WTC11 (cell line): ENCODE measurements at regions of chr7 and their contacts with region 1.

Region 1: DNA sequence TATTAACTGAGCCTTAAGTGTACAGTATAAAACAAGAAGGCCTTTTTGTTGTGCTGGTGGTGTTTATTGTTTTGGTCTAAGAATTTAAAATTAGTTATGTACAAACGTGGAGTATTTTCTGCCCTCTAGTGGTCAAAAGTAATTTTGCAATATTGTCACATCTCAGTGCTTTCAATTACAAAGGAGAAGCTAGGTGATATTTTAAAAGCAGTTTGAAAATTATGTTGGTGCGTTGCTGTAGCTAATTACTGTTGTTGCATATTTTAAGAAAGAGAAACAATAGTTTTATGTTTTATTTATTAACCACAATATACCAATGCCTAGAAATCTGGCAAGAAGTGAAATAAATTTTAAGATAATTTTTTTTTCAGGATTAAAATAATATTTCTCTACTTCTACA is 11.4 kb downstream of the NPVF start:
- DNase-seq: no peak
- ATAC-seq: no peak
- H3K4me3 Mint-ChIP-seq: no peak overlapping the region
- H3K27ac Mint-ChIP-seq: no peak overlapping the region
- H3K4me1 Mint-ChIP-seq: peaks cover 4% of the 10 kb centered on the region
- H3K27me3 Mint-ChIP-seq: no peaks in the 10 kb centered on the region
- CTCF ChIP-seq: peak; percentile 71

Region 2: DNA sequence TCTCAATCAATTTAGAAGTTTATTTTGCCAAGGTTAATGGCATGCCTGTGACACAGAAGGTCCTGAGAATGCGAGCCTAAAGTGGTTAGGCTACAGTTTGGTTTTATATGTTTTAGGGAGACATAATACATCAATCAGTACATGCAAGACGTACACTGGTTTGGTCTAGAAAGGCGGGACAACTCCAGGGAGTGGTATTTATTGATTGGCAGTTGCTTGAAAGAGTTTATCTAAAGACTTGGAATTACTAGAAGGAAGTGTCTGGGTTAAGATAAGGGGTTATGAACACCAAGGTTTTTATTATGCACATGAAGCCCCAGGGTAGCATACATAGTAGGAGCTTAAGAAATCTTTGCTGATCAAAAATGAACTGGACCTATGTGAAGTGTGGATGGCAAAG is 10.1 kb before region 1 on chr7:
- CTCF ChIA-PET with region 1: interaction called, 14 read pairs
- POLR2A ChIA-PET with region 1: no interaction called
- DNase-seq: no peak
- ATAC-seq: no peak
- H3K4me3 Mint-ChIP-seq: no peak overlapping the region
- H3K27ac Mint-ChIP-seq: no peak overlapping the region
- H3K4me1 Mint-ChIP-seq: no peaks in the 10 kb centered on the region
- H3K27me3 Mint-ChIP-seq: no peaks in the 10 kb centered on the region; the same call in 1 of the 2 replicates
- CTCF ChIP-seq: no peak

Region 3: DNA sequence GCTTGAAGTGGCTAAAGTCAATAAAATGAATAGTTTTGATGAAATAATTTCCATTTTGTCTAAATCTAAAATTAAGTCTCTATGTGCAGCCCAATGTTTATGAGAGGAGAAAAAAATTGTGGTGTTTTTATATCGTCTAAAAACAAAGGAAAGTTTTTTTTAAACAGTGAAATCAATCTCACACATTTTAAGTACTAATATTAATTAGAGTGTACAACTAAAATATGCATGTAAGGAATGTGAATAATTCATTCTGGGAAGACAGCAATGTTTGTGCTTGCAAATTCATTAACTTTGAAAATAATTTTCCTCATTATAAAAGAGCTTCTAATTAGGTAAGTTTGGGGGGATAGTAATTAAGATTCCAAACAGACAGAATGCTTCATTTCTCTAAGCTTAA is 11.5 kb after region 1 on chr7 and contains the start of gene NPVF:
- CTCF ChIA-PET with region 1: interaction called, 19 read pairs
- POLR2A ChIA-PET with region 1: no interaction called
- DNase-seq: no peak
- ATAC-seq: no peak
- H3K4me3 Mint-ChIP-seq: no peak within 1 kb of the TSS
- H3K27ac Mint-ChIP-seq: no peak within 1 kb of the TSS
- H3K4me1 Mint-ChIP-seq: no peaks in the 10 kb centered on the region
- H3K27me3 Mint-ChIP-seq: peaks cover 3% of the 10 kb centered on the region; the same call in 1 of the 2 replicates
- CTCF ChIP-seq: no peak
- total RNA-seq, gene NPVF: not detected in 3 replicates

Region 4: GRCh38 chr7:25234336-25234735 is 17.5 kb after region 1 on chr7:
- CTCF ChIA-PET with region 1: interaction called, 19 read pairs
- POLR2A ChIA-PET with region 1: no interaction called
- DNase-seq: no peak
- ATAC-seq: no peak
- H3K4me3 Mint-ChIP-seq: no peak overlapping the region
- H3K27ac Mint-ChIP-seq: no peak overlapping the region
- H3K4me1 Mint-ChIP-seq: no peaks in the 10 kb centered on the region
- H3K27me3 Mint-ChIP-seq: peaks cover 19% of the 10 kb centered on the region
- CTCF ChIP-seq: no peak

Region 5: GRCh38 chr7:25244254-25245033 is 27.6 kb after region 1 on chr7:
- CTCF ChIA-PET with region 1: interaction called, 13 read pairs
- POLR2A ChIA-PET with region 1: no interaction called
- DNase-seq: no peak
- ATAC-seq: peak; percentile 78
- H3K4me3 Mint-ChIP-seq: no peak overlapping the region
- H3K27ac Mint-ChIP-seq: no peak overlapping the region
- H3K4me1 Mint-ChIP-seq: peaks cover 11% of the 10 kb centered on the region
- H3K27me3 Mint-ChIP-seq: peaks cover 95% of the 10 kb centered on the region
- CTCF ChIP-seq: no peak

Region 6: DNA sequence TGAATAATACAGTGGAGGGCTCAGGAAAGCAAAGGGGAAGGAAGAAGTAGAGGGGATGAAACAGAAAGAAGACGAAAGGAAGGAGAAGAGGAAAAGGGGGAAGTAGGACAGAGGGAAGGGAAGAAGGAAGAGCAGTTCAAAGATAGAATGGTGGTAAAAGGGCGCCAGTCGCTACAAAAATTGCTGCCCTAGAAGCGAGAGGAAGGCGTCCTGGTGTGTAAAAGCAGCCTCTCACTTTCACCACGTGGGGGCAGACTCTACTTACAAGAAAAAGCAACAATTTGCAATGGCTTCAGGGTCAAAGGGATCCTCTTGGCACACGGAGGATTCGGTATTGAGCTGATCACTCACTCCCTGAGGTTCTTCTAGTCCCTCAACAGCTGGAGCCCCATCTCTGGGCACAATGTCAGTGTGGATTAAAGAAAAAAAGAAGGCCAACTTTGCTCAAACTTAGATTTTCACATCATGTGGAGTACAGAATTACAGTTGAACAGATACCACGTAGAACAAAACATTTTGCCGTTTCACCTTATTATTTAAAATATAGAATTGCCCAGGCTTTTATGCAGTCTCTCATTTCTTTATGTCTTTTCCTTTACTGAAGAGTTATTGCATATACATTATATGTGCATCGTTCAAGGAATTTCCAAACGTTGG is 42.9 kb after region 1 on chr7:
- CTCF ChIA-PET with region 1: interaction called, 10 read pairs
- POLR2A ChIA-PET with region 1: no interaction called
- DNase-seq: peak; percentile 69
- ATAC-seq: peak; percentile 95
- H3K4me3 Mint-ChIP-seq: no peak overlapping the region
- H3K27ac Mint-ChIP-seq: no peak overlapping the region
- H3K4me1 Mint-ChIP-seq: peaks cover 9% of the 10 kb centered on the region
- H3K27me3 Mint-ChIP-seq: no peaks in the 10 kb centered on the region; the same call in 1 of the 2 replicates
- CTCF ChIP-seq: peak; percentile 53